ENCODE measurements at regions of chr6 and their contacts with region 1.

Region 1: DNA sequence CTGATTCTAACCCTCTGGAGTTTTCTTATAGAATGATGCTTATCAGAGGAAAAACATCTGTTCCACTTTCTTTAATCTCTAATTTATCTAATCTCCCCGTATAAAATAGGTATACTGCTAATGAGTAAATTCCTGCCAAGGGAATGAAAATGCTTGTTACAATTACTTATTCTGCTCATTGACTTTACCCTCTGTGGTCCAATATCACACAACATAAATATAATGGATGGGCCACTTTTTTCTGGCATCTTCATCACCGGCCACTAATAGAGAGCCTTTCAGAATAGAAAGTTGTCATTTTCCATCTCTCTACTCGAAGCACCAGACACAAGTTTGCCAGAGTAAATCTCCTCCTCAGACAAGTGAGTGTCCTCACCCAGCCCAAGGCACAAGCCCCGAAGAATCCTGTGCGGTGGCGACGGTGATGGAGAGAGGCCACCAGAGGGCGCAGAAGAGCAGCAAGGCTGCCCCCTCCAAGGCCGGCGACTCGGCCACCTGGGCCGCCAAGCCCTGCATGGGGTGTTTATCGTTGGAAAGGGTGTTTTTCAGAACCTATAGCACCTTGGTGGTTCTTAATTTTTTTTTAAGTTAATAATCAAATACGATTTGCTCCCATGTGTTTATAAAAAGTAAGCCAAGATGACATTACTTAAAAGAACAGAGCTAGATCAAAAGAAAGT is 212.9 kb upstream of the ARID1B start:
- DNase-seq: peak; percentile 4 to 83 (median 66)
- ATAC-seq: peak; percentile 84 to 95 (median 92)
- H3K4me3 ChIP-seq: no peak overlapping the region
- H3K4me3 Mint-ChIP-seq: no peak overlapping the region
- H3K27ac ChIP-seq: no peak overlapping the region
- H3K27ac Mint-ChIP-seq: no peak overlapping the region
- H3K4me1 ChIP-seq: peaks cover 0 to 7% of the 10 kb centered on the region in 2 experiments
- H3K4me1 Mint-ChIP-seq: peaks cover 6 to 7% (median 6%) of the 10 kb centered on the region in 3 donors
- H3K27me3 ChIP-seq: peaks cover 0 to 22% of the 10 kb centered on the region in 2 experiments
- H3K27me3 Mint-ChIP-seq: peaks cover 9 to 11% of the 10 kb centered on the region in 2 donors

Region 2: GRCh38 chr6:155890409-155890808 is 673.9 kb before region 1 on chr6:
- CTCF ChIA-PET with region 1: interaction called in 1 of 2 experiments, 11 read pairs
- POLR2A ChIA-PET with region 1: no interaction called
- DNase-seq: no peak
- ATAC-seq: no peak
- H3K4me3 ChIP-seq: no peak overlapping the region
- H3K4me3 Mint-ChIP-seq: no peak overlapping the region
- H3K27ac ChIP-seq: no peak overlapping the region
- H3K27ac Mint-ChIP-seq: no peak overlapping the region
- H3K4me1 ChIP-seq: no peaks in the 10 kb centered on the region
- H3K4me1 Mint-ChIP-seq: no peaks in the 10 kb centered on the region
- H3K27me3 ChIP-seq: no peaks in the 10 kb centered on the region
- H3K27me3 Mint-ChIP-seq: no peaks in the 10 kb centered on the region

Region 3: GRCh38 chr6:156865019-156865629 is 300.9 kb after region 1 on chr6:
- CTCF ChIA-PET with region 1: interaction called in 1 of 2 experiments, 12 read pairs
- POLR2A ChIA-PET with region 1: no interaction called
- DNase-seq: no peak
- ATAC-seq: no peak
- H3K4me3 ChIP-seq: no peak overlapping the region
- H3K4me3 Mint-ChIP-seq: no peak overlapping the region
- H3K27ac ChIP-seq: no peak overlapping the region
- H3K27ac Mint-ChIP-seq: peak overlapping the region; percentile 18 to 25
- H3K4me1 ChIP-seq: peaks cover 10 to 33% of the 10 kb centered on the region in 2 experiments
- H3K4me1 Mint-ChIP-seq: peaks cover 77 to 89% (median 86%) of the 10 kb centered on the region in 3 donors
- H3K27me3 ChIP-seq: no peaks in the 10 kb centered on the region
- H3K27me3 Mint-ChIP-seq: no peaks in the 10 kb centered on the region